Activated CD4-positive, alpha-beta memory T cell treated with anti-CD3 and anti-CD28 coated beads, Interleukin-2, amount 10 ng/mL, durations not matched to agents 7 days and 5 days (primary cell): ENCODE measurements at regions of chr9 and their contacts with region 1.

Region 1: DNA sequence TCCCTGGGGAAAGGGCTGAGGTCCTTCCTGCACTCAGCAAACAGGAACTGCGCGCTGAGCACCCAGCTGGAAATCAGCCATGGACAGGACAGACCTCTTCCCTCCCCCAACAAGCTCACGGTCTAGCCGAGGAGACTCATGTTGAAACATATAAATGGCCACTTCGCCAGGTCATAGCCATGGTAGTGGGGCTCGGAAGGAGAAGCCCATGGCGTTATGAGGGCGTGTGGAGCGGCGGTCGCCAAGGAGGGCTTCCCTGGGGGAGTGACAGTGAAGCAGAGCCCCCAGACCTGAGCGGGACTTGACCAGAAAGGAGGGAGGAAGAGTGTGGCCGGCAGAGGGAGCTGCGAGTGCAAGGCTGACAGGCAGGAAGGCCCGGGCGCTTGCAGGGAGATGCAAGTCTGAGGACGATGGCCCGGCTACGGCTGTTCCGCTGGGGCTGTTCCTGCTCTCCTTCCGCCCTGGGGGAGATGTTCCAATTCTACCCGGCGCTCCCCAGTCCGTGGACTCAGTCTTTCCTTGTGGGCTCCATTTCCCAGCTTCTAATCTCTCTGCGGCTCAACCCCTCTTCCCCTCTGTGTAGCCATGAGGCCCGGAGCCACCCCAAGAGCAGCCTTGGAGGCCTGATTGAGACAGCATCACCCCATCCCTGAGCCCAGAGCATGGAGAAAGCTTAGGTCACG is 43.9 kb upstream of the PRRC2B start:
- DNase-seq: peak; percentile 88
- H3K4me3 Mint-ChIP-seq: no peak overlapping the region
- H3K27ac Mint-ChIP-seq: peak overlapping the region; percentile 38
- H3K4me1 Mint-ChIP-seq: peaks cover 15% of the 10 kb centered on the region
- H3K27me3 Mint-ChIP-seq: no peaks in the 10 kb centered on the region

Region 2: GRCh38 chr9:131366761-131367401 is 16.9 kb after region 1 on chr9:
- CTCF ChIA-PET with region 1: interaction called, 21 read pairs
- POLR2A ChIA-PET with region 1: interaction called, 17 read pairs
- DNase-seq: no peak
- H3K4me3 Mint-ChIP-seq: no peak overlapping the region
- H3K27ac Mint-ChIP-seq: no peak overlapping the region
- H3K4me1 Mint-ChIP-seq: peaks cover 2% of the 10 kb centered on the region
- H3K27me3 Mint-ChIP-seq: no peaks in the 10 kb centered on the region

Region 3: DNA sequence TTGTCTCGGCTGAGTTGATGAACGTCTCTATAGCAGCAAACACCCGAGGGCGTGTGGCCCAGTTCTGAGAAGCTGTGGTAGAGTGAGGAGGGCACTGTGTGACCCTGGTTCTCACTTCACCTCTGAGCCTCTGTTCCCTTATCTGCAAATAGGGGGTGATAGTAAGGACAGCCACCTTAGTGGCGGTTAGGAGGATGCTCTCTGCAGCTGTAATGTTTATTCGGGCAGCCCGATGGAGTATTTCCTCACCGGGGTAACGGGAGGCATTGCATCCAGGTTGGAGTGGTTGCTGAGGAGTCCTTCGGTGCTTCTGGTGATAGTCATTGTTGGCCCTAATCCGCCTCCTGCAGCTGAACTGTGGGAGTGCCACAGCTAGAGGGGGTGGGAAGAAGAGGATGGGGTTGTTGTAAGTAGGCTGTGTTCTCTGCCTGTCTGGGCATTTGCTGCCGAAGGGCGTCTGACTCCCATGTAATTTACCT is 57.7 kb after region 1 on chr9:
- CTCF ChIA-PET with region 1: interaction called, 20 read pairs
- POLR2A ChIA-PET with region 1: interaction called, 5 read pairs
- DNase-seq: peak; percentile 51
- H3K4me3 Mint-ChIP-seq: peak overlapping the region; percentile 55
- H3K27ac Mint-ChIP-seq: peak overlapping the region; percentile 65
- H3K4me1 Mint-ChIP-seq: peaks cover 83% of the 10 kb centered on the region
- H3K27me3 Mint-ChIP-seq: no peaks in the 10 kb centered on the region

Region 4: GRCh38 chr9:131481441-131482342 is 131.7 kb after region 1 on chr9:
- CTCF ChIA-PET with region 1: interaction called, 14 read pairs
- POLR2A ChIA-PET with region 1: no interaction called
- DNase-seq: no peak
- H3K4me3 Mint-ChIP-seq: no peak overlapping the region
- H3K27ac Mint-ChIP-seq: no peak overlapping the region
- H3K4me1 Mint-ChIP-seq: no peaks in the 10 kb centered on the region
- H3K27me3 Mint-ChIP-seq: no peaks in the 10 kb centered on the region

Region 5: GRCh38 chr9:131500939-131501541 is 151.0 kb after region 1 on chr9:
- CTCF ChIA-PET with region 1: interaction called, 19 read pairs
- POLR2A ChIA-PET with region 1: interaction called, 7 read pairs
- DNase-seq: peak; percentile 71
- H3K4me3 Mint-ChIP-seq: peak overlapping the region; percentile 60
- H3K27ac Mint-ChIP-seq: peak overlapping the region; percentile 88
- H3K4me1 Mint-ChIP-seq: peaks cover 57% of the 10 kb centered on the region
- H3K27me3 Mint-ChIP-seq: no peaks in the 10 kb centered on the region

Region 6: DNA sequence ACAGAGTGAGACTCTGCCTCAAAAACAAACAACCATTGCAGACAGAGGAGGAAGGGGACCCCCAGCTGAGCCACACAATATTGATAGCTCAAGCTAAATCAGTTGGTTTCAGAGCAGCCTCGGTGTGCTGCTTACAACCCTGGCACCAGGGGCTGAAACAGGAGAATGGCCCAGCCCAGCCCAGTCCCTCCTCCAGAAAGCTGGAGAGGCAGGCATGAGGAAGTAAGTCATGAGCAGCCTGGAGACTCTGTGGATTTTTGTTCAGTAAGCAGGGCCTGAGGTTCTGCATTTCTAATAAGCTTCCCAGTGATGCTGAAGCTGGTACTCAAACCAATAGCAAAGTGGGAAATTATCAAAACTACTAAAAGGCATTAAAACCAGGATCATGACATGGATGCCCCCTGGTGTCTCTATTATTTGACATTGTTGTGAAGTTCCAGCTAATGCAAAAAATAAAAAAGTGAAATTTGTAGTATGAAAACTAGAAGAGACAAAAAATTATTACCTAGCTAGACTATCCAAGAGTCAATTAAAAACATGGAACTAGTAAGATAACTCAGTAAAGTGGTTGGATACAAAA is 209.5 kb after region 1 on chr9:
- CTCF ChIA-PET with region 1: interaction called, 11 read pairs
- POLR2A ChIA-PET with region 1: no interaction called
- DNase-seq: no peak
- H3K4me3 Mint-ChIP-seq: no peak overlapping the region
- H3K27ac Mint-ChIP-seq: no peak overlapping the region
- H3K4me1 Mint-ChIP-seq: peaks cover 4% of the 10 kb centered on the region
- H3K27me3 Mint-ChIP-seq: peaks cover 18% of the 10 kb centered on the region

Region 7: GRCh38 chr9:131739980-131740648 is 390.1 kb after region 1 on chr9 and contains the start of gene RAPGEF1:
- CTCF ChIA-PET with region 1: interaction called, 11 read pairs
- POLR2A ChIA-PET with region 1: no interaction called
- DNase-seq: peak; percentile 85
- H3K4me3 Mint-ChIP-seq: peak within 1 kb of the TSS; percentile 97
- H3K27ac Mint-ChIP-seq: peak within 1 kb of the TSS; percentile 92
- H3K4me1 Mint-ChIP-seq: peaks cover 59% of the 10 kb centered on the region
- H3K27me3 Mint-ChIP-seq: no peaks in the 10 kb centered on the region
- total RNA-seq, gene RAPGEF1: 149 to 158 TPM